Transverse colon (tissue), 4 donors: ENCODE measurements at regions of chr10 and their contacts with region 1.

Region 1: GRCh38 chr10:124388823-124389612 is 29.7 kb downstream of the OAT start:
- DNase-seq: peak; percentile 94
- H3K4me3 ChIP-seq: peak overlapping the region; percentile 34 to 59 (median 40)
- H3K27ac ChIP-seq: peak overlapping the region; percentile 17 to 68 (median 45)
- H3K4me1 ChIP-seq: peaks cover 3 to 12% (median 10%) of the 10 kb centered on the region in 4 donors
- H3K27me3 ChIP-seq: no peaks in the 10 kb centered on the region
- CTCF ChIP-seq: peak; percentile 85 to 97 (median 95)
- EP300 ChIP-seq: no peak
- POLR2A ChIP-seq: no peak

Region 2: DNA sequence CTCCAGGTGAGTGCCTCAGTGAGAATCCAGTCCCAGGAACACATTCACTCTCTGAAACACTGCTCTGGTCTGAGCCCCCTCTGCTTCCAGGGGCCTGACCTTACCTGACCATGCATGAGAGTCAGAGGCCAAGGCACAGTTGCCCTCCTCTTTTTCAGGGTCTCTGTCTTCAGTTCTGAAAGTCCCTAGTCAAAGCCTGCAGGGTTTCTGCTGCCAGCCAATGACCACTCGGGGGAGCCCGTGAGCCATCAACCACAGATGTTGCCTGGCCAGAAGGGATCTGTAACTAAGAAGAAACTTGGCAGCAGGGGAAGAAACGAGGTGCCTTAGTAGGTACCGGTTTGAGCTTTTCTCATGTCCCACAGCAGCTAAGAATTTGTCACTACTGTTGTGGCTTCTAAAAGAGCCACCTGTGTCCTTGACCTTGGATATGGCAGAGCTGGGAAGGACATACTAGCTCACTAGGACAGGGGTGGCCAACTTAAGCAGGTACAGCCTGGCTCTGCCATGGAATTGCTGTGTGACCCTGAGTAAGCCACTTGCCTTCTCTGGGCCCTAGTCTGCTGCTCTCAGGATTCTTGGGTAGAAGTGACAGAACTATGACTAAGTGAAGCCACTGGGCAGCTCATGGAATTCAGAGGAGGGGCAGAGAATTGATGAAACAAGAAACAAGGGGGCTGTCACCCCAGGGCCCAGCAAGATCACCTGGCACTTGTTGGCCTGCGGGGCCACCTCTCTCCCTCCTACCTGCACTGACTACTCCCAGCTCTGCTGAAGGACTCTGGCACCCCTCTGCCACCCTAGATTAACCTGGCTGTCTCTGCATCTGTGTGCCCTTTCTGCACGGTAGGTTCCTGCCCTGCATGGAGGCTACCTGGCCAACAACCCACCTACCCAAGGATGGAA is 806.7 kb before region 1 on chr10:
- in situ Hi-C with region 1: loop called (anchors 25 kb)
- intact Hi-C with region 1: no loop called
- DNase-seq: peak; percentile 79
- H3K4me3 ChIP-seq: no peak overlapping the region
- H3K27ac ChIP-seq: no peak overlapping the region
- H3K4me1 ChIP-seq: peaks cover 0 to 10% (median 2%) of the 10 kb centered on the region in 4 donors
- H3K27me3 ChIP-seq: peaks cover 8% of the 10 kb centered on the region
- CTCF ChIP-seq: peak; percentile 65 to 89 (median 76)
- EP300 ChIP-seq: no peak
- POLR2A ChIP-seq: no peak

Region 3: GRCh38 chr10:123994417-123995081 is 394.5 kb before region 1 on chr10:
- in situ Hi-C with region 1: loop called in 3 of 4 experiments (anchors 5 to 10 kb)
- intact Hi-C with region 1: loop called (anchors 1 kb)
- DNase-seq: peak; percentile 90
- H3K4me3 ChIP-seq: peak overlapping the region in 2 of 4 donors; percentile 3 to 5
- H3K27ac ChIP-seq: peak overlapping the region in 2 of 4 donors; percentile 41 to 64
- H3K4me1 ChIP-seq: peaks cover 15 to 27% (median 18%) of the 10 kb centered on the region in 4 donors
- H3K27me3 ChIP-seq: peaks cover 55% of the 10 kb centered on the region
- CTCF ChIP-seq: peak; percentile 99
- EP300 ChIP-seq: no peak
- POLR2A ChIP-seq: no peak

Region 4: DNA sequence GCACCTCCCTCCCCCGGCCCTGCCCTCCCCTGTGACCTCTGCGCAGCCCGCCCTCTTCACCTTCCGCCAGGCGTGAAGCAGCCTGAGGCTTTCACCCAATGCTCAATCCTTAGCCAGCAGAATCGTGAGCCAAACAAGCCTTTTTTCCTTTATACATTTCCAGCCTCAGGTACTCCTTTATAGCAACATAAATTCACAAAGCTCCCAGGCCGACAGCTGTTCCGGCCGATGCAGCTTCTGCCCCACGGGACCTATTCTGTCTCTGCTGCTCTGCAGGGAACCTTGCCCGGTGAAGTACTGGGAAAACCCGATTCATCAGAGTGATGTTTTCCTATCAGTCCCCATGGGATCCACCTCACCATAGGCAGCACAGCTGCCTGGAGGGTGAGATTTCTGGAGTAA is 383.0 kb before region 1 on chr10:
- in situ Hi-C with region 1: loop called in 1 of 4 experiments (anchors 5 kb)
- intact Hi-C with region 1: no loop called
- DNase-seq: peak; percentile 10
- H3K4me3 ChIP-seq: no peak overlapping the region
- H3K27ac ChIP-seq: peak overlapping the region; percentile 54 to 78 (median 73)
- H3K4me1 ChIP-seq: peaks cover 0 to 28% (median 12%) of the 10 kb centered on the region in 4 donors
- H3K27me3 ChIP-seq: no peaks in the 10 kb centered on the region
- CTCF ChIP-seq: no peak
- EP300 ChIP-seq: no peak
- POLR2A ChIP-seq: no peak

Region 5: GRCh38 chr10:124092860-124093773 is 295.9 kb before region 1 on chr10 and contains the start of gene CHST15:
- in situ Hi-C with region 1: no loop called
- intact Hi-C with region 1: loop called (anchors 10 kb)
- DNase-seq: peak; percentile 46
- H3K4me3 ChIP-seq: peak within 1 kb of the TSS; percentile 47 to 70 (median 56)
- H3K27ac ChIP-seq: peak within 1 kb of the TSS; percentile 87 to 94 (median 89)
- H3K4me1 ChIP-seq: peaks cover 7 to 56% (median 31%) of the 10 kb centered on the region in 4 donors
- H3K27me3 ChIP-seq: peaks cover 71% of the 10 kb centered on the region
- CTCF ChIP-seq: peak in 1 of 5 experiments; percentile 8
- EP300 ChIP-seq: no peak
- POLR2A ChIP-seq: peak; percentile 57
- total RNA-seq, gene CHST15: 10.0 to 25.4 (median 16.0) TPM

Region 6: DNA sequence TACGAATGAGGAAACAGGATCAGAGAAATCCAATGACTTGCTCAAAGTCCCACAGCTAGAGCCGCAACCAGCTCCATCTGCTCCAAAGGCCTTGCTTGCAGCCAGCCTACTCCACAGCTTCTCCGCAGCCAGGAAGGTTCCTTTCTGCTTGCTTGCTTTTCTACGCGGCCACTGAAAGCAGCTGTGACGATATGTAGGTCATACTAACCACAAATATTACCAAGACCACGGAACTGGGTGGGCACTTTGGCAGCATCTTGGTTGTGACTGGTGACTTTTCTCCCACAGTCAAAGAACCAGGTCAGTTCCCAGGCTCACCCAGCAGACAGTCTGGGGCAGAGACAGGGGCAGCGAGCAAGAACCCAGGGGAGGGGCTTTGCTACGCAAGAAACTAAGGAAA is 268.8 kb after region 1 on chr10:
- in situ Hi-C with region 1: no loop called
- intact Hi-C with region 1: no loop called
- DNase-seq: no peak
- H3K4me3 ChIP-seq: no peak overlapping the region
- H3K27ac ChIP-seq: peak overlapping the region; percentile 28 to 38 (median 36)
- H3K4me1 ChIP-seq: peaks cover 0 to 14% (median 3%) of the 10 kb centered on the region in 4 donors
- H3K27me3 ChIP-seq: no peaks in the 10 kb centered on the region
- CTCF ChIP-seq: no peak
- EP300 ChIP-seq: no peak
- POLR2A ChIP-seq: no peak

Region 7: DNA sequence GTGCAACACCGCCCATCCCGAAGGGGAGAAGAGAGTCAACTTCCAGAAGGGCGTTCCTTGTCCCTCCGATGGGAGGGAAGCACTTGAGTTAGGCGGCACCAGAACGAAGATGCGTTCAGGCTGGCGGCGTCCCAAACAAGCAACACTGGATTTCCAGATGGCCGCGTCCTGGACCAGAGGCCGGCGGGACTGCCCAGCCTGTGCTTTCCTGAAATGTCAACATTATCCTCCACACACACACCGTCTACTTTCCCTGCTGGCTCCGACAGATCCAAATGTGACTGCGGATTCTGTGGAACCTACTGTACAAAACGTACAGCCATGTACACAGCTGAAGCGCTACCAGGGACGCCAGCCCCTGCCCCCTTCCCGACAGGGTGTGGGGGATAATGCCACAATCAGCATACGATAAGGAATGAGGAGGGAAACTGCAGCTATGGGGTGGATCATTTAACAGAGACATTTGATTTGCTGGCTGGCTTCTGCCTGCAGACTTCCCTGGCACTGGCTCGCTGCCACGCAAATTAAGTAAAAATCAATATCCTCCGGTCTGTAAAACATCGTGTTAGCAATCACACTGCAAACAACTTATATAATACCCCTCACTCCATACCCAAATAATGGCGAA is 635.0 kb after region 1 on chr10:
- in situ Hi-C with region 1: no loop called
- intact Hi-C with region 1: no loop called
- DNase-seq: peak; percentile 62
- H3K4me3 ChIP-seq: no peak overlapping the region
- H3K27ac ChIP-seq: peak overlapping the region; percentile 9 to 72 (median 45)
- H3K4me1 ChIP-seq: peaks cover 22 to 32% (median 24%) of the 10 kb centered on the region in 4 donors
- H3K27me3 ChIP-seq: no peaks in the 10 kb centered on the region
- CTCF ChIP-seq: no peak
- EP300 ChIP-seq: no peak
- POLR2A ChIP-seq: no peak